Esophagus muscularis mucosa (tissue), 4 donors: ENCODE measurements at regions of chr6 and their contacts with region 1.

Region 1: DNA sequence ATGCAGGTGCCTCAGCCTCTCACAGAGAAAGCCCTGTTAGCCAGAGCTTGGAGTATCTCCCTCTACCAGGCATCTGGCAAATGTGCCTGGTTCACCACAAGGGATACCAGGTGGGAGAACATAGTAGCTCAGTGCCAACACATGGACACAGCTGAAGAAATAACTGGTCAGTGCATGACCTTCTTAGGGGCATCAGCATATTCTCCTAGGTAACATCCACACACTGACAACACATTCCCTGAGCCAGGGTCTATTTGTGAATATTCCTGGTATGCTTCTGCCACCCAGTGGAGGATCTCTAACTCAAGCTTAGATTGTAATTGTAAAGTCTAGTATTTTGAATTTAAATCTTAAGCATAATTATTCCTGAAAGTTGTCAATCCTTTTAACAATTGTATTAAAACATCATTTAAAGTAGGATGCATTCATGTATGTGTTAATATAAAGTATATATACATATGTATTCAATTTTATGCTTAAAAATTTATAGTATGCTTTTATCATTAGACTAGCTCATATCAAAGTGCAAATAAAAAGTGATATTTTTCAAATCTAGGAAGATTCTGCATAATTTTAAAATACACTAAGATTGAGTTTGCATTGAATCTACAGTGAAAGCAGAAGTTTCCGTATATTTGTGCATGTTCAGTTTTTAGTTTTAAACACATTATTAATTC is 45.3 kb upstream of the COL21A1 start:
- DNase-seq: no peak
- H3K4me3 ChIP-seq: no peak overlapping the region
- H3K27ac ChIP-seq: no peak overlapping the region
- H3K4me1 ChIP-seq: peaks cover 5 to 16% (median 11%) of the 10 kb centered on the region in 4 donors
- H3K27me3 ChIP-seq: no peaks in the 10 kb centered on the region
- CTCF ChIP-seq: peak; percentile 56 to 68 (median 60)
- EP300 ChIP-seq: no peak
- POLR2A ChIP-seq: no peak

Region 2: DNA sequence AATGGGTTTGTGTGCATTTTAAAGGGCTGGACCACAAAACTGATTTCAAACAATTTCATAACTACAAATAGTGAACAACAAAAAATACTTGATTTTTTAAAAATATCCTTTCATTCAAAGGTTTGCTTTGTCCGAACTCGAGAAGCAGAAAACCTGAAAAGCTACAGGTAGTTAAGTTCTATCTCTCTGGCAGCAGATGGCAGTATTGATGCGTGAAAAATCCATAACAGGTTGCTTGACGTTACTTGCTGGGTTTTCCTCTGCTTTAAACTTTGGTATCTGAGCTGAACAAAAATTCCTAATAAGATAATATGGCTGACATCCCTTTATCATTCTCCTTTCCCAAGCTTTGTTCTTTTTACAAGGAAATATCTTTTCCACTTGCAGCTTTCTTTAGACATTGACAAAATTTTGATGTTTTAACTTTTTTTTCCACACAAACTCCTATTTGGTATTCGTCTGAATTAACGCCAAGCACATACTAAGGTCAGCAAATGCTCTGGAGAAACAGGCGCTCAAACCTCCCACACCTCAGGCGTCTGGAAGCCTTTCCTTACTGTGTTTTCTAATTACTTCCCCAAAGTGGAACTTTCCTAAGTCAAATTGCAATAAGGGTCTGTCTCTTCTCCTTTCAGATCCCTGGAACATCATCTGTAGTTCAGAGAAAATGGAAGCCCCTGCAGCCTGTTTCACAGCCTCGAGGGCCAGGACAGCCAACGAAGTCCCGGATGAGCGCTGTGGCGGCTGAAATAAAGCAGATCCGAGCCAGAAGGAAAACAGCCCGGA is 1015.7 kb before region 1 on chr6:
- intact Hi-C with region 1: loop called (anchors 10 kb)
- DNase-seq: no peak
- H3K4me3 ChIP-seq: no peak overlapping the region
- H3K27ac ChIP-seq: no peak overlapping the region
- H3K4me1 ChIP-seq: peaks cover 0 to 3% (median 1%) of the 10 kb centered on the region in 4 donors
- H3K27me3 ChIP-seq: no peaks in the 10 kb centered on the region
- CTCF ChIP-seq: peak; percentile 43 to 52 (median 43)
- EP300 ChIP-seq: no peak
- POLR2A ChIP-seq: no peak

Region 3: GRCh38 chr6:55445648-55446204 is 846.9 kb before region 1 on chr6:
- intact Hi-C with region 1: loop called (anchors 10 kb)
- DNase-seq: no peak
- H3K4me3 ChIP-seq: no peak overlapping the region
- H3K27ac ChIP-seq: no peak overlapping the region
- H3K4me1 ChIP-seq: peaks cover 0 to 12% (median 7%) of the 10 kb centered on the region in 4 donors
- H3K27me3 ChIP-seq: no peaks in the 10 kb centered on the region
- CTCF ChIP-seq: peak; percentile 47 to 61 (median 50)
- EP300 ChIP-seq: no peak
- POLR2A ChIP-seq: no peak

Region 4: DNA sequence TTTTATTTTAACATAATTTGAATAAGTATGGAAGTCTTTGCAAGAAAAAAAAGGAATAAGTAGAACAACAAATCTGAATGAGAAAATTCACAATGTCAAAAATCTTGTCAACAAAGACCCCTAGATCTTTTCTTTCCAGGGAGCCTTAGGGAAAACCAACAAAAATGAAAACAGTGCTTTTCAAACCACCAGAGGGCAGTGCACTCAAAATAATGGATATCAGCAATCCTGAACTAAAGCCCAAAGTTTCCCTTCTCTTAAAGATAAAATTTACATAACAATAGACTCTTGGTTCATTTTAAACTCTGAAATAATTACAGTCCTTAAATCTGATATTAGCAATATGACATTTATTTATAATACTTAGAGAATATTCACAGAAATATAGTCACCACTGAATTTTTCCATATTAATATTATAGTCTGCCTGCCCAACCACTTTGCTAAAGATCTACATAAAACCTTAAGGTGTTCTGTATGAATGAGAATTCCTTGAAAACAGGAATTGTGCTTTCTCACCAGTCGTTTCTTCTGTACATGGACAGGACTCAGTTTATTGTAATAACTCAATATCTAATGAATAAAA is 311.9 kb before region 1 on chr6:
- intact Hi-C with region 1: loop called (anchors 1 kb)
- DNase-seq: no peak
- H3K4me3 ChIP-seq: no peak overlapping the region
- H3K27ac ChIP-seq: no peak overlapping the region
- H3K4me1 ChIP-seq: peaks cover 0 to 5% (median 0%) of the 10 kb centered on the region in 4 donors
- H3K27me3 ChIP-seq: no peaks in the 10 kb centered on the region
- CTCF ChIP-seq: peak; percentile 66 to 78 (median 68)
- EP300 ChIP-seq: no peak
- POLR2A ChIP-seq: no peak